ENCODE measurements at regions of chr7 and their contacts with region 1.

Region 1: DNA sequence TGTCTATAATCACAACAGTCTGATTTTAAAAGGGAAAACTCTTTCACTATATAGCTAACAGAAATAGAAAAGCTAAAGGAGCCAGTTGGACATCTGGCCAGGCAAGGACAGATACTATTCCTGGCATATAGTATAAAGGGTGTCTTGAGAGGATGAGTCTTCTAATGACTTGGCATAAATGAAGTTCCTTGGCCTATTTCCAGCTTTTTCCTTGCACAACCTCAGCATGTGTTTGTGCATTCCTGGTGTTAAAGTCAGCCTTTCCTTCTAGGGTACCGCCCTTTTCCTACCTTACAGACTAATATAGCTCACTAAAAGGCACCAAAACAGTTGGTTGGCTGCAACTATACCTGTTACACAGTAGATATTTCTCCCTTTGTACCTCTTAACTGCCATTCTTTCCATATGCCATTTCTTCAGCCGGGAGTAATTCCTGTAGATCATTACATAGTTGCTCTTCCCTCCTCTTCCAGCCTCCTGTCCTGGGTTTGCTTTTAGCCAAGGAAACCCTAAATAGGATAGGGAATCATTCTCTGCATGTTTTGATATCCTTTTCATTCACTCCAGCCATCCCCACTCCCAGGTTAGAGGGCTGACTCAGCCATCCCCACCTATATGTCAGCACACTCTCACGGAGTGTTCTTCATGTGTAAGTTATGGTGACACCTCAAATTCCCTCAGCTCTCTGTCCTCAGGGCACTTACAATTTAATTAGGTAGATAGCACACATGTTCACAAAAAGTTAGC is 102.1 kb upstream of the MDFIC start:
- DNase-seq: no peak
- H3K4me3 Mint-ChIP-seq: no peak overlapping the region
- H3K27ac Mint-ChIP-seq: no peak overlapping the region
- H3K4me1 Mint-ChIP-seq: peaks cover 11% of the 10 kb centered on the region
- H3K27me3 Mint-ChIP-seq: no peaks in the 10 kb centered on the region

Region 2: GRCh38 chr7:114426382-114427223 is 393.2 kb before region 1 on chr7:
- intact Hi-C with region 1: no loop called
- DNase-seq: no peak
- H3K4me3 Mint-ChIP-seq: no peak overlapping the region
- H3K27ac Mint-ChIP-seq: no peak overlapping the region
- H3K4me1 Mint-ChIP-seq: no peaks in the 10 kb centered on the region
- H3K27me3 Mint-ChIP-seq: no peaks in the 10 kb centered on the region

Region 3: GRCh38 chr7:114799628-114800028 is 20.2 kb before region 1 on chr7:
- intact Hi-C with region 1: loop called (anchors 1 kb)
- DNase-seq: no peak
- H3K4me3 Mint-ChIP-seq: no peak overlapping the region
- H3K27ac Mint-ChIP-seq: peak overlapping the region; percentile 94
- H3K4me1 Mint-ChIP-seq: peaks cover 48% of the 10 kb centered on the region
- H3K27me3 Mint-ChIP-seq: no peaks in the 10 kb centered on the region

Region 4: DNA sequence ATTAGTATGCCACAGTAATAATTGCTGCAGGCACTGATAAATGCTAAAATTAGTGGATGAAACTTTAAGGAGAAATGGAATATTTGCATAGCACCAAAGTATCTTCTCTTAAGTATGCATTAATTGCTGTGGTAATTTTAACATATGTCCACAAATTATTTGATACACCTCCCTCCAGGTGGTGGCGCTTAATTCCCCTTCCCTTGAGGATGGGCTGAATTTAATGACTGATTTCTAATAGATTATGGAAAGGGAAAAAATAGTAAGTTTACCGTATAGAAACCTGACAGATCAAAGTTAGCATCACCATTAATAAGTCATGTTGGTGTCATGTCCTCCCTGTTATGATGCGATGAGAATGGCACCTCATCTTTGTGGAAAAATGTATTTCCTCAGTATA is 691.5 kb after region 1 on chr7:
- intact Hi-C with region 1: no loop called
- DNase-seq: no peak
- H3K4me3 Mint-ChIP-seq: no peak overlapping the region
- H3K27ac Mint-ChIP-seq: no peak overlapping the region
- H3K4me1 Mint-ChIP-seq: no peaks in the 10 kb centered on the region
- H3K27me3 Mint-ChIP-seq: peaks cover 5% of the 10 kb centered on the region